ENCODE measurements at regions of chr4 and their contacts with region 1.

Region 1: DNA sequence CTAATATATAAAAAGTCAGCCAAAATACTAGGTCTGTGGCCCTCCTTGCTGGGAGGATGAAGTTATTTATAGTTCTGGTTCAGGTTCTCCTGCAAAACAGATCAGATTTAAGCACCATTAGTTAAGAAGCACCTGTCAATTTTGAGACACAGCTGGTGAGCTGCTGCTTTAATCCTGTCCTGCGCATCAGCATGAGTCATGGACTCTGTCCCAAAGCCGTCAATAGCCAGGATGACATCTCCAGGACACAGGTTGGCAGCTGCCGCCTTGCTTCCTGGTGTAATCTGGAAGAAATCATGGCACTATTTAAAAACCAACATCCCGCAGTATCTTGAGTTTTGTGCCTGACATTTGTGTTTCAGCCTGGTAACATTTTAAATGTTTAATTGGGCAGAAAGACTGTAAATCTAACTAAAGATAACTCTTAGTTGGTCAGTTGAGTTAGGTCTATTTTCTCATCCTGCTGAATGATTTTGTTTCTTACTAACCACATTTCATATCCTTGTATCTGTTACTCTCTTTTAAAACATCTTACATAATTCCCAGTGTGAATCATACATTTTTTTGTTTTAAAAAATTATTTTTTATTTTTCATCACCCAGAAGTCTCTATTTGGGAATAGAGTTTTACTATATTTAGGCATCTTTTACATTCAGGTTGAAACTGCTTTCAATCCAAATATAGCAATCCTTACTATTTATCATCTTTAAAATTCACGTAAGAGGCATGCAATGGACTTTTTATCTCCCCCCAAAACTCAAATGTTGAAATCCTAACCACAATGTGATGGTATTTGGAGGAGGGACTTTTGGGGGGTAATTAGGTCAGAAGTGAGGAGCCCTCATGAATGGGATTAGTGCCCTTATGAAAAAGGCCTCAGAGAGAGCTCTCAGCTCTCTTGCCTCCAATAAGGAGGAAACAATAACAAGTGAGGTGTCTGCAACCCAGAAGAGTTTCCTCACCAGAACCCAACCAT is 10.1 kb downstream of the PDLIM3 start:
- DNase-seq: peak; percentile 89 to 94
- ATAC-seq: peak; percentile 95 to 96
- H3K4me3 ChIP-seq: no peak overlapping the region
- H3K27ac ChIP-seq: peak overlapping the region; percentile 89 to 98 (median 96)
- H3K4me1 ChIP-seq: peaks cover 60 to 69% of the 10 kb centered on the region in 2 donors
- H3K27me3 ChIP-seq: no peaks in the 10 kb centered on the region
- CTCF ChIP-seq: no peak
- POLR2A ChIP-seq: peak; percentile 5 to 50

Region 2: GRCh38 chr4:185209031-185209851 is 315.9 kb before region 1 on chr4 and contains the start of gene SNX25:
- in situ Hi-C with region 1: no loop called
- intact Hi-C with region 1: no loop called
- DNase-seq: peak; percentile 69 to 80
- ATAC-seq: peak; percentile 86 to 89
- H3K4me3 ChIP-seq: peak within 1 kb of the TSS; percentile 56 to 80 (median 68)
- H3K27ac ChIP-seq: peak within 1 kb of the TSS; percentile 75 to 90 (median 82)
- H3K4me1 ChIP-seq: peaks cover 20 to 25% of the 10 kb centered on the region in 2 donors
- H3K27me3 ChIP-seq: no peaks in the 10 kb centered on the region
- CTCF ChIP-seq: peak in 4 of 5 experiments; percentile 13 to 54 (median 34)
- POLR2A ChIP-seq: peak; percentile 94 to 97
- total RNA-seq, gene SNX25: 11.3 to 17.3 (median 13.4) TPM

Region 3: DNA sequence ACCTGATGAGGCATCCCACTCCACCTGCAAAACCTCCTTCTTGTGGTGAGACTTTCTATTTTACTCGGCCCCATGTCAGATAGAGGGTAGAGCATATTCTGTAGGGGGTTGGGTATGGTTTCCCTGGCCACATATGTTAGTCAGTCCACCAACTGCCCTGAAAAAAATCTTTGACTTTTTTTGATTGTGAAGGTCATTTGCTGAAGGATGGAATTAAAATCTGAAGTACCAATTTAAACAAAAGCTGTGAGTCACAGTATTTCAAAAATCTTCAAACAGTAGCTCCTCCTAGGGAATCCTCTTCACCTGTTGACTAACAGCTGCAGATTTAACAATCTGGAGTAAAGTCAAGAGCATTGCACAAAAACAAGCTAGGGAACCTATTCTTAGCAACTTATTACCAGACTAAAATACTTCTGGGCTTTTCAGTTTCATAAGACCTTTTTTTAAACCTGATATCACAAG is 45.6 kb before region 1 on chr4:
- in situ Hi-C with region 1: no loop called
- intact Hi-C with region 1: loop called (anchors 5 kb)
- DNase-seq: peak in 1 of 2 donors; percentile 31
- ATAC-seq: peak; percentile 96
- H3K4me3 ChIP-seq: peak overlapping the region in 1 of 4 donors; percentile 24
- H3K27ac ChIP-seq: peak overlapping the region; percentile 78 to 90 (median 82)
- H3K4me1 ChIP-seq: peaks cover 29 to 33% of the 10 kb centered on the region in 2 donors
- H3K27me3 ChIP-seq: no peaks in the 10 kb centered on the region
- CTCF ChIP-seq: no peak
- POLR2A ChIP-seq: no peak

Region 4: GRCh38 chr4:185573651-185574199 is 48.5 kb after region 1 on chr4:
- in situ Hi-C with region 1: no loop called
- intact Hi-C with region 1: loop called (anchors 2 kb)
- DNase-seq: peak; percentile 82 to 90
- ATAC-seq: peak; percentile 76 to 82
- H3K4me3 ChIP-seq: peak overlapping the region in 2 of 4 donors; percentile 9 to 16
- H3K27ac ChIP-seq: peak overlapping the region; percentile 91 to 93 (median 92)
- H3K4me1 ChIP-seq: peaks cover 64 to 75% of the 10 kb centered on the region in 2 donors
- H3K27me3 ChIP-seq: no peaks in the 10 kb centered on the region
- CTCF ChIP-seq: no peak
- POLR2A ChIP-seq: peak; percentile 59 to 86